Cardiac septum (tissue), 1 donor: ENCODE measurements at regions of chr4 and their contacts with region 1.

Region 1: GRCh38 chr4:123116412-123116811 is 194.0 kb upstream of the NUDT6 start:
- DNase-seq: no peak

Region 2: DNA sequence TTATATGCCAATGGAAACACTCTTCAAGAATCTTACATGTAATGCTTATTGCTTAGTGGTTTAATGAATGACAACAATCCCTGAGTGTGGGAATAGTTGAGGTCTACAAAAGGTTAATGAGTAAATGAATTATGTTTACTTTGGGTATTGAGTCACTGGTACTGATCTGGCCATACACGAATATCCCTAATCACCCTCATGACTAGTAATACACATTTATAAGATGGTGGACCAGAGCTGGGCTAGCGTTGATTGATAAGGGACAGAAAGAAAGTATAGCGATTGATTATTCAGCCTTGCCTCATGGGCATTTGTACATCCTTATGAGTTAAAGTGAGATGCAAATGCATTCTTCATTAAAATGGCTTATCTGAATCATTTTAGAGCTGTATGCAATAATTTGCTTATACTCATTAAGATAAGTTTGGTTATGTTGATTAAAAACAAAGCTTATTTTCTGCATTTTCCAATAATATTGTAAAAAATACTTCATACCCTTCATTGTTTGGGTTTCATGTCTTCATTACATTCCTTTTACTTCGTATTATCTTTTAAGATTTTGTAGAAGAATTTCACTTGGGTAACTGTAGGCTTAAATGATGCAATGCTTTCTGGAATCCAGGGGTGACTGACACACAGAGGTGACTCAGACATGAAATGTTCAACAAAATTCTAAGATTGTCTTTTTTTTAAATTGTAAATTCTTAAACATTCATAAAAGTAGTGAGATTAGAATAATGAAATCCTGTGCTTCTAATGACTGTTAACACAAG is 242.4 kb before region 1 on chr4:
- intact Hi-C with region 1: no loop called
- DNase-seq: no peak

Region 3: GRCh38 chr4:123661080-123661737 is 544.8 kb after region 1 on chr4:
- intact Hi-C with region 1: loop called (anchors 10 kb)
- DNase-seq: no peak